ENCODE measurements at regions of chr20 and their contacts with region 1.

Region 1: GRCh38 chr20:45823949-45824835 is 2.9 kb downstream of the TNNC2 start:
- DNase-seq: peak in 3 of 5 donors; percentile 44 to 73 (median 53)
- ATAC-seq: peak in 3 of 4 donors; percentile 63 to 72 (median 67)
- H3K4me3 ChIP-seq: peak overlapping the region in 7 of 12 donors; percentile 3 to 28 (median 21)
- H3K27ac ChIP-seq: no peak overlapping the region
- H3K4me1 ChIP-seq: peaks cover 0 to 38% (median 24%) of the 10 kb centered on the region in 12 donors
- H3K27me3 ChIP-seq: peaks cover 2 to 30% (median 19%) of the 10 kb centered on the region in 9 donors
- CTCF ChIP-seq: peak; percentile 18 to 59 (median 42)
- POLR2A ChIP-seq: no peak

Region 2: GRCh38 chr20:45963059-45964005 is 139.1 kb after region 1 on chr20:
- intact Hi-C with region 1: loop called in 5 of 10 experiments (anchors 5 to 10 kb)
- DNase-seq: peak in 1 of 5 donors; percentile 38
- ATAC-seq: peak in 2 of 4 donors; percentile 12 to 15
- H3K4me3 ChIP-seq: no peak overlapping the region
- H3K27ac ChIP-seq: no peak overlapping the region
- H3K4me1 ChIP-seq: no peaks in the 10 kb centered on the region
- H3K27me3 ChIP-seq: no peaks in the 10 kb centered on the region
- CTCF ChIP-seq: peak in 8 of 12 donors; percentile 23 to 49 (median 32)
- POLR2A ChIP-seq: no peak

Measured in heart left ventricle (tissue), 16 donors.